HepG2 (cell line): ENCODE measurements at regions of chr4 and their contacts with region 1.

Region 1: DNA sequence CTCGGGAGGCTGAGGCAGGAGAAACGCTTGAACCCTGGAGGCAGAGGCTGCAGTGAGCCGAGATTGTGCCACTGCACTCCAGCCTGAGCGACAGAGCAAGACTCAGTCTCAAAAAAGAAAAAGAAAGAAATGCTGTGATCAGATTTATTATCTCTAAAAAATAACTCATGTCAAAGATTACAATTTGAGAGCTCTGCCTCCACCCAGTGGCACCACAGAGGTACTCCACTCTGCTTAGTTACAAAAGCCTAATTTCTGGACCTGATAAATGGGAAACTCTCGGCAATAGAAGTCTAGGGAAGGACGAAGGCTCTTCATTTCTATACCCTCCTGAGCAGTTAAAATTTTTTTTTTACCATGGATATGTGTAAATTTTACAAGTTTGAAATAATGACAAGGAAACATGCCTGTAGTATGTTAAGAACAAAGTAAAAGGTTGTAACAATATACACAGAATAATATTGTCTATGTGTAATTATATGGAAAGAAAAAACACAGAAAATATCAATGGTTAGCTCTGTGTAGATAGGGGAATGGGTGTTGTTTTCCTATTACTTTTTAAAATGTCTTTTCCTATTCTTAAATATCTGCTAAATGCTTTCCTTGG is 149.8 kb downstream of the STIM2 start:
- DNase-seq: peak; percentile 46
- ATAC-seq: peak; percentile 81
- H3K4me3 ChIP-seq: no peak overlapping the region
- H3K27ac ChIP-seq: no peak overlapping the region
- H3K4me1 ChIP-seq: no peaks in the 10 kb centered on the region
- H3K27me3 ChIP-seq: no peaks in the 10 kb centered on the region
- CTCF ChIP-seq: peak; percentile 69
- EP300 ChIP-seq: no peak
- POLR2A ChIP-seq: no peak
- RAD21 ChIP-seq: peak; percentile 59; the same call in 1 of the 2 replicates

Region 2: DNA sequence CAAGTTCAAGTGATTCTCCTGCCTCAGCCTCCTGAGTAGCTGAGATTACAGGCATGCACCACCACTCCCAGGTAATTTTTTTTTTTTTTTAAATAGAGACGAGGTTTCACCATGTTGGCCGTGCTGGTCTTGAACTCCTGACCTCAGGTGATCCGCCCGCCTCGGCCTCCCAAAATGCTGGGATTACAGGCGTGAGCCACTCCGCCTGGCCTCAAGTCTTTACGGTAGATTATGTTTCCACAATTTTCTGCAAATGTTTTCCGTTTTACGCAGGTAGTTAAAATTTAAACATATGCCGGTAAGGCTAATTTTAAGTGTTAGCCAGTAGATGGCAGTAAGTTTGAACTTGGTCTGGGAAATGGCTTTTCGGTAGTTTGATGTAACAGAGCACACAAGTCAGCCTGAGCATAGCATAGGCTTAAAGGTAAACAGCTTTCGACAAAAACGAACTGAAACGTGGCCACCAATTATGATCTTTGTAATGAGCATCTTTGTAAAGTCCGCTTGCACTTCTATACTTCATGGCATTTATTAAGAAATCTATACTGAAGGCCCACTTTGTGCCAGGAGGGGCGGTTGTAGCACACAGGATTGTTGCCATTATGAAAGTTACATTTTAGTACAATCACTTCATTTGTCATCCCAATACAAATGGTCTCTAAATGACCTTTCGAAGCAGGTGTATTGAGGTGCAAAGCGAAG is 551.2 kb before region 1 on chr4:
- CTCF ChIA-PET with region 1: interaction called, 9 read pairs
- POLR2A ChIA-PET with region 1: no interaction called
- in situ Hi-C with region 1: no loop called
- intact Hi-C with region 1: loop called (anchors 2 kb)
- DNase-seq: peak; percentile 58
- ATAC-seq: peak; percentile 78
- H3K4me3 ChIP-seq: peak overlapping the region in 1 of 3 experiments; percentile 13; a peak in 1 of 6 replicates
- H3K27ac ChIP-seq: no peak overlapping the region
- H3K4me1 ChIP-seq: peaks cover 23% of the 10 kb centered on the region
- H3K27me3 ChIP-seq: no peaks in the 10 kb centered on the region; a peak in 2 of 5 replicates
- CTCF ChIP-seq: peak; percentile 75
- EP300 ChIP-seq: no peak
- POLR2A ChIP-seq: no peak
- RAD21 ChIP-seq: peak; percentile 31; the same call in 1 of the 2 replicates

Region 3: DNA sequence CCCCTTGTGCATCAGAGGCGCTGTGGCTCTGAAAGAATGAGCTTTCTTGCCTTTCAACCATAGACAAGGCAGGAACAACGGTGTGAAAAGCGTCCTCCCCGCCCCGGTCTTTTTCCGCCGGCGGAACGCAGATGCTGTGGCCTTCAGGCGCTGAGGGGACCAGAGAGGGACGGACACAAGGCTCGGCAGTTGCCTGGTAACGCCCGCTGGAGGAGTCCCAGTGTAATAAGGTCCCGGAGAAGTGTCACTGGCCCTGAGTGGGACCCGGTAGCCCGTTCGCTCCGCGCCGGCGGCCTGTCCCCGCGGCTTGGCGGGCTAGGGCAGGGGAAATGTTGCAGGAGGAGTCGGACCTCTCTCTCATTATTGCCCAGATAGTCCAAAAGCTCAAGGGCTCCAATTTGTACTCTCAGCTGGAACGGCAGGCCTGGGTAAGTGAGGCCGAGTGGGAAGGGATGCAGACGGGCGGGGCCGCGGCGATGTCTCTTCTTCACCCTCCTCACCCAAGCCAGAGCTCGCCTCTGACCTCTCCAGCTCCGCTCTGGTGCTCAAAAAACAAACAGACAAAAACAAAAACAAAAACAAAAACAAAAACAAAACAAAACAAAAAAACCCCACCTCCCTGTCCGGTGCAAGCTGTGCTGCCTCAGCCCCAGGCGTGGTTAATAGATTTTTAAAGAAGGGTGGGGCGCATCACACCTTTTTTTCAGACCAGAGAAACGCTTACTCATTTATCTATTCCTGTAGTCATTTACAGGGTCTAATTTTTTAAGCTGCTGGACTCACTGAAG is 426.4 kb before region 1 on chr4 and contains the start of gene TBC1D19:
- CTCF ChIA-PET with region 1: no interaction called
- POLR2A ChIA-PET with region 1: no interaction called
- in situ Hi-C with region 1: no loop called
- intact Hi-C with region 1: loop called (anchors 1 kb)
- DNase-seq: peak; percentile 70
- ATAC-seq: peak; percentile 100
- H3K4me3 ChIP-seq: peak within 1 kb of the TSS; percentile 76 to 82 (median 80)
- H3K27ac ChIP-seq: no peak within 1 kb of the TSS
- H3K4me1 ChIP-seq: peaks cover 13% of the 10 kb centered on the region
- H3K27me3 ChIP-seq: no peaks in the 10 kb centered on the region
- CTCF ChIP-seq: peak; percentile 43
- EP300 ChIP-seq: 0 out of 4 replicates have a peak, but pooled peaks of 1 of the 2 experiments have one; percentile 21
- POLR2A ChIP-seq: peak in 1 of 2 experiments; percentile 32; a peak in 1 of 4 replicates
- RAD21 ChIP-seq: peak; percentile 59
- total RNA-seq, gene TBC1D19: 3.5 and 3.6 TPM in 2 replicates

Region 4: GRCh38 chr4:26787461-26788340 is 222.7 kb before region 1 on chr4:
- CTCF ChIA-PET with region 1: no interaction called
- POLR2A ChIA-PET with region 1: no interaction called
- in situ Hi-C with region 1: loop called (anchors 25 kb)
- intact Hi-C with region 1: loop called (anchors 1 kb)
- DNase-seq: peak; percentile 32
- ATAC-seq: peak; percentile 87
- H3K4me3 ChIP-seq: peak overlapping the region in 2 of 3 experiments; percentile 23 to 36; a peak in 3 of 6 replicates
- H3K27ac ChIP-seq: no peak overlapping the region
- H3K4me1 ChIP-seq: peaks cover 15% of the 10 kb centered on the region
- H3K27me3 ChIP-seq: peaks cover 2 to 7% of the 10 kb centered on the region in 2 experiments; a peak in 2 of 5 replicates
- CTCF ChIP-seq: peak; percentile 42
- EP300 ChIP-seq: no peak
- POLR2A ChIP-seq: no peak
- RAD21 ChIP-seq: 0 out of 2 replicates have a peak, but pooled peaks have one; percentile 19

Region 5: DNA sequence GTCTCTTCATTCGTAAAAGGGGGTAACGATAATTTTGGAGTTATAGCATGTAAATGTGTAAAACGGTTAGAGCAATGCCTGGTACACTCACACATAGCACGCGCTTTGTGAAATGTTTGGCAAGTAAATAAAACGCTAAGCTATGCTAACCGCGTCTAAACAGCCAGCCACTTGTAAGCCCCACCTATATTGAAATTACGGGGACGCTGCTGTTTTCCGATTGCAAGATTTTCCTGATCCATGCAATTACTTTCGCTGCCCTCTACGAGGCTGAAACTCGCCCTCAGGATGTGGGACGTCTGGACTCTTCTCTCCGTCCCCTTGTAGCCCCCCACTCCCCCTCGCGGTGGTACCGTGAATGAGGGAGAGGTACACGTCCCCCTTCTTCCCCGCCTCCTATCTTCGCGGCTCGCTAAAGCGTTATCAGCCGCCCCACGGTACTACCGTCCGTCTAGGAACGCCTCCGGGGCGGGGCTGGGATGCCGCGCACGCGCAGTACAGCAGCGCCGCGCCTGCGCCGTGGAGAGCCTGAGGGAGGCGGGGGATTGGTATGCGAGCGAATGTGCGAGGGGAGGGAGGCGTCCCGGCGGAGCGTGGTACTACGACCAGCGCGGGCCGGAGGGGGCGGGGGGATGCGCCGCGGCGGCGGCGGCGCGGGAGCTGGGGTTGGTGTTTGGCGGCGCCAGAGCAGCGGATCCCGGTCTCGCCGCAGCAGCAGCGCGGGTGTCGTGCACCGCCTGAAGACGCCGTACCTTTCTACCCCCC is 150.1 kb before region 1 on chr4 and contains the start of gene STIM2:
- CTCF ChIA-PET with region 1: no interaction called
- POLR2A ChIA-PET with region 1: no interaction called
- in situ Hi-C with region 1: no loop called
- intact Hi-C with region 1: loop called (anchors 1 kb)
- DNase-seq: peak; percentile 93
- ATAC-seq: peak; percentile 76
- H3K4me3 ChIP-seq: peak within 1 kb of the TSS; percentile 80 to 91 (median 89)
- H3K27ac ChIP-seq: peak within 1 kb of the TSS; percentile 78
- H3K4me1 ChIP-seq: peaks cover 54% of the 10 kb centered on the region
- H3K27me3 ChIP-seq: no peaks in the 10 kb centered on the region; a peak in 1 of 5 replicates
- CTCF ChIP-seq: peak; percentile 80
- EP300 ChIP-seq: no peak
- POLR2A ChIP-seq: peak in 1 of 2 experiments; percentile 65; a peak in 2 of 4 replicates
- RAD21 ChIP-seq: peak; percentile 48
- total RNA-seq, gene STIM2: 8.2 and 19.3 TPM in 2 replicates